HCT116 (cell line): ENCODE measurements at regions of chr4 and their contacts with region 1.

Region 1: GRCh38 chr4:87973283-87974169 is 2.0 kb upstream of the SPP1 start:
- DNase-seq: peak; percentile 59
- ATAC-seq: peak; percentile 79
- H3K4me3 ChIP-seq: no peak overlapping the region
- H3K27ac ChIP-seq: no peak overlapping the region
- H3K4me1 ChIP-seq: peaks cover 2 to 24% of the 10 kb centered on the region in 2 experiments; a peak in 3 of 4 replicates
- H3K27me3 ChIP-seq: no peaks in the 10 kb centered on the region
- CTCF ChIP-seq: peak; percentile 63 to 83 (median 74); a peak in 5 of 6 replicates
- POLR2A ChIP-seq: no peak
- RAD21 ChIP-seq: peak; percentile 79

Region 2: DNA sequence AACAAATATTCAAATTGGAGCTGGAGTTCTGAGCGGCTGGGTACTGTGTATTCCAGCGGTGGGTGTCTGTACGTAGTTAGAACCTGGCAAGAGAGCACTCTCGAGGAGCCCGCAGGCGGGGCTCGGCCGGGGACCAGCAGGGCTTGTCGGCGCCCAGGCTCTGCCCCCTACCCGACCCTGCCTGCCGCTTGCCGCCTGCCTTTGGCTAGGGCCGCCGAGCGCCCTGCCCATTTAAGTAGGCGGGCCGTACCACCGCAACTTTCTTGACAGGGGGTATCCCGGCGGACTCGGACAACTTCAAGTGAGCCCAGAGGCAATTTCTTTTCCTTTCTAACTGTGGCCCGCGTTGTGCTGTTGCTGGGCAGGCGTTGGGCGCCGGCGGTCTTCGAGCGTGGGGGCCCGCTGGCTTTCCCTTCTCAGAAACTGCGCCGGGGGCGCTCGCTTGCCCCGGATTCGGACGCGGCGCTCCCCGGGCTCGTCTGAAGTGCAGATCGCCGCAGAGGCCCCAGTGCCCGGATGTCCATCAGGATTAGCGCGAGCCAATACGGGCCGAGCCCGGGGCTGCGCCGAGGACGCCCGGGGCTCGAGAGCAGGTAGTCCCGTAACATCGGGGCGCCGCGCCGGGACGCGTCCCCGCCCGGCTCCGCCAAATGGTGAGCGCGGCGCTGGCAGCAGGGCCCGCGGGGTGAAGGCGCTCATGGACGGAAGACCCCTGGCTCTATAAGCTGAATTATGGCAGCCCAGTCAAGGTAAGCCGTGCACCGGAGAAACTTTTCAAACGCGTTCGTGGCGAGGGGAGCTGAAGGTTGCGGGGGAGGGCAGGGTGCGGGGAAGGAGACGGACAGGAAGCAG is 966.6 kb before region 1 on chr4:
- CTCF ChIA-PET with region 1: no interaction called
- POLR2A ChIA-PET with region 1: no interaction called
- RAD21 ChIA-PET with region 1: no interaction called
- intact Hi-C with region 1: no loop called
- DNase-seq: peak; percentile 86
- ATAC-seq: peak; percentile 91
- H3K4me3 ChIP-seq: peak overlapping the region; percentile 63 to 94
- H3K27ac ChIP-seq: peak overlapping the region; percentile 90
- H3K4me1 ChIP-seq: peaks cover 23 to 40% of the 10 kb centered on the region in 2 experiments
- H3K27me3 ChIP-seq: no peaks in the 10 kb centered on the region
- CTCF ChIP-seq: peak in 1 of 3 experiments; percentile 36; a peak in 3 of 6 replicates
- POLR2A ChIP-seq: peak; percentile 98
- RAD21 ChIP-seq: peak; percentile 37

Region 3: GRCh38 chr4:87026800-87027495 is 946.6 kb before region 1 on chr4:
- CTCF ChIA-PET with region 1: no interaction called
- POLR2A ChIA-PET with region 1: no interaction called
- RAD21 ChIA-PET with region 1: no interaction called
- intact Hi-C with region 1: no loop called
- DNase-seq: no peak
- ATAC-seq: no peak
- H3K4me3 ChIP-seq: no peak overlapping the region
- H3K27ac ChIP-seq: no peak overlapping the region
- H3K4me1 ChIP-seq: no peaks in the 10 kb centered on the region
- H3K27me3 ChIP-seq: no peaks in the 10 kb centered on the region
- CTCF ChIP-seq: no peak
- POLR2A ChIP-seq: no peak
- RAD21 ChIP-seq: no peak

Region 4: GRCh38 chr4:87543835-87544461 is 429.6 kb before region 1 on chr4:
- CTCF ChIA-PET with region 1: no interaction called
- POLR2A ChIA-PET with region 1: no interaction called
- RAD21 ChIA-PET with region 1: no interaction called
- intact Hi-C with region 1: loop called (anchors 10 kb)
- DNase-seq: peak; percentile 38
- ATAC-seq: peak; percentile 97
- H3K4me3 ChIP-seq: no peak overlapping the region
- H3K27ac ChIP-seq: no peak overlapping the region
- H3K4me1 ChIP-seq: no peaks in the 10 kb centered on the region
- H3K27me3 ChIP-seq: 0 out of 2 replicates have a peak, but pooled peaks cover 3% of the 10 kb centered on the region
- CTCF ChIP-seq: peak; percentile 65 to 71 (median 69)
- POLR2A ChIP-seq: no peak
- RAD21 ChIP-seq: peak; percentile 74

Region 5: GRCh38 chr4:87848622-87849351 is 124.7 kb before region 1 on chr4:
- CTCF ChIA-PET with region 1: interaction called, 49 read pairs
- POLR2A ChIA-PET with region 1: no interaction called
- RAD21 ChIA-PET with region 1: interaction called, 3 to 4 read pairs
- intact Hi-C with region 1: loop called (anchors 1 kb)
- DNase-seq: peak; percentile 51
- ATAC-seq: peak; percentile 97
- H3K4me3 ChIP-seq: peak overlapping the region; percentile 30 to 48
- H3K27ac ChIP-seq: no peak overlapping the region
- H3K4me1 ChIP-seq: peaks cover 0 to 9% of the 10 kb centered on the region in 2 experiments; a peak in 3 of 4 replicates
- H3K27me3 ChIP-seq: no peaks in the 10 kb centered on the region
- CTCF ChIP-seq: peak; percentile 55 to 62 (median 58)
- POLR2A ChIP-seq: no peak
- RAD21 ChIP-seq: peak; percentile 55

Region 6: GRCh38 chr4:87863486-87863885 is 110.0 kb before region 1 on chr4:
- CTCF ChIA-PET with region 1: interaction called, 19 read pairs
- POLR2A ChIA-PET with region 1: no interaction called
- RAD21 ChIA-PET with region 1: interaction called, 3 read pairs
- intact Hi-C with region 1: no loop called
- DNase-seq: no peak
- ATAC-seq: peak; percentile 73
- H3K4me3 ChIP-seq: no peak overlapping the region
- H3K27ac ChIP-seq: no peak overlapping the region
- H3K4me1 ChIP-seq: peaks cover 0 to 9% of the 10 kb centered on the region in 2 experiments; a peak in 1 of 4 replicates
- H3K27me3 ChIP-seq: no peaks in the 10 kb centered on the region
- CTCF ChIP-seq: peak in 2 of 3 experiments; percentile 4 to 19; a peak in 2 of 6 replicates
- POLR2A ChIP-seq: no peak
- RAD21 ChIP-seq: peak; percentile 43

Region 7: GRCh38 chr4:87961993-87962392 is 11.5 kb before region 1 on chr4:
- CTCF ChIA-PET with region 1: interaction called, 18 read pairs
- POLR2A ChIA-PET with region 1: no interaction called
- RAD21 ChIA-PET with region 1: no interaction called
- intact Hi-C with region 1: no loop called
- DNase-seq: no peak
- ATAC-seq: peak; percentile 90
- H3K4me3 ChIP-seq: no peak overlapping the region
- H3K27ac ChIP-seq: no peak overlapping the region
- H3K4me1 ChIP-seq: peaks cover 0 to 11% of the 10 kb centered on the region in 2 experiments; a peak in 2 of 4 replicates
- H3K27me3 ChIP-seq: no peaks in the 10 kb centered on the region
- CTCF ChIP-seq: no peak
- POLR2A ChIP-seq: no peak
- RAD21 ChIP-seq: no peak

Region 8: DNA sequence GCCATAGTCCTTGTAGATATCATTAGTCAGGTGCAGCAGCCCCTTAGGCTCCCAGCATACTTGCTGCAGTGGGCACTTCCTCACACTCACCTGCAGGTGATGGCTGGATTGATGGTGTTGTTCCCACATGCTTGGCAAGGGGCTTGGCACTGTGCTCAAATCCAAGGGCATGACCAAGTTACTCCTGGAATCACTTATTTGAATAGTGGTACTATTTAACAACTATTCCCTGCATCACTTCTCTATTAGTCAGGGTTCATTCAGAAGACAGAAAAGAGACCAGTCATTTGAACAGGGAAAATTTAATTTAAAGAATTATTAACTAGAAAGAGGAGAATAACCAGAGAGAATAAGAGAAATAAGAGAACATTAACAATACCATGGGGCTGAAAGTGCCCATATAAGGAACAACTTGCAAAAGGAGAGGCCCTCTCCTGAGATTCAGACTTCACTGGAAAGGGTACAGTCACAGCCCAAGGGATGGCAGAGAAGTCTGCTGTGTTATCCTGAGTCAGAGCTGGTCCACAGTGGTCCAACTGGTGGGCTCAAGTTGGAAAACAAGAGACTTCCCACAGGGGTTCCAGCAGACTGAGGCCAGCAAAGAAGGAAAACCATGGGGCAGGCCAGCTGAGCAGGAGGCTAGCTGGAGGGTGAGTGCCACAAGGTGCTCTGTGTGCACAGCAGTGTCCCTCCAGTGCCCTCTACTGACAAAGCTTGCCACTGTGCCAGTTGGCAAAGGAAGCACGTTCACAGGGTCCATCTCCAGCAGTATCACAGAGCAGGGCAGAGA is 11.8 kb after region 1 on chr4:
- CTCF ChIA-PET with region 1: interaction called, 45 read pairs
- POLR2A ChIA-PET with region 1: interaction called, 4 read pairs
- RAD21 ChIA-PET with region 1: interaction called in 1 of 2 experiments, 4 read pairs
- intact Hi-C with region 1: no loop called
- DNase-seq: peak; percentile 58
- ATAC-seq: peak; percentile 100
- H3K4me3 ChIP-seq: no peak overlapping the region
- H3K27ac ChIP-seq: no peak overlapping the region
- H3K4me1 ChIP-seq: peaks cover 0 to 5% of the 10 kb centered on the region in 2 experiments; a peak in 1 of 4 replicates
- H3K27me3 ChIP-seq: no peaks in the 10 kb centered on the region
- CTCF ChIP-seq: peak; percentile 68 to 93 (median 82)
- POLR2A ChIP-seq: no peak
- RAD21 ChIP-seq: peak; percentile 90